Activated T-helper 1 cell treated with anti-CD3 and anti-CD28 coated beads, Interleukin-12 subunit alpha, Interleukin-12 subunit beta, Interleukin-2, Interleukin-4 antibody, amounts not matched to agents 30 ng/mL and 10 ng/mL and 1 ng/mL, durations not matched to agents 14 hours and 24 hours and 36 hours (primary cell): ENCODE measurements at regions of chr14 and their contacts with region 1.

Region 1: GRCh38 chr14:80996049-80996901 is 40.9 kb downstream of the TSHR start:
- DNase-seq: no peak
- H3K4me3 Mint-ChIP-seq: no peak overlapping the region
- H3K27ac Mint-ChIP-seq: no peak overlapping the region
- H3K4me1 Mint-ChIP-seq: peaks cover 8% of the 10 kb centered on the region
- H3K27me3 Mint-ChIP-seq: peaks cover 34% of the 10 kb centered on the region

Region 2: DNA sequence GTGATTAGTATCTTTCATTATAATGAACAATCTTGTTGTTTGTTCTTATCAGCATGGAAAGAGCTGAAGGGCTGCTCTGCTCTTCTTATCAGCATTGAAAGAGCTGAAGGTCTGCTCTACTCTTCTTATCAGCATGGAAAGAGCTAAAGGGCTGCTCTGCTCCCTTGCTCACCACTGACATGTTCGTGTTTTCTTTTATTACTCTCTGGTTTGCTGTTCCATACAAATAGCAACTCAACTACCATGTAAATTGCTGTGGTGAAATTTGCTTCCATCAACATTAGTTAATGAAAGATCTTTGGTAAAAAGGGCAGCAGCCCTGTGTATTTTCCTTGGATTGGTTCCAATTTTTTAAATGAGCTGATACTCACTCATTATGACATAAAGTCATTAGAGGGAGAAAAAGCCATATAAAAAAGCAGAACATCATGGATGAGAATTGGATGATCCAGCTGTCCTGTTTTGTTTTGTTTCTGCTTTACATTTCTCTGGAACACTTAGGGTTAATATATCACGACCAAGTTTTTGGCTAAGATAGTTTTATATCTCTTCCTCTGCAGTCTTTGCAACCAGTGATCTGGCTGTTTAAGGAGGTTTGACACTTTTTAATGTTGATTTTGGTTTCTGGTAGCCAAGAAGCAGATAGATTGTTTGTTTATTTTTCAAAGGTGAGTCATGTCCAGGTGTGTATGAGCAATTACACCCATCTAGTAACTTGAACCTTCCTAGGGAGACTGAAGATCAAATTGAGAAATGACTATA is 411.4 kb before region 1 on chr14:
- intact Hi-C with region 1: no loop called
- DNase-seq: no peak
- H3K4me3 Mint-ChIP-seq: no peak overlapping the region
- H3K27ac Mint-ChIP-seq: no peak overlapping the region
- H3K4me1 Mint-ChIP-seq: peaks cover 10% of the 10 kb centered on the region
- H3K27me3 Mint-ChIP-seq: no peaks in the 10 kb centered on the region

Region 3: DNA sequence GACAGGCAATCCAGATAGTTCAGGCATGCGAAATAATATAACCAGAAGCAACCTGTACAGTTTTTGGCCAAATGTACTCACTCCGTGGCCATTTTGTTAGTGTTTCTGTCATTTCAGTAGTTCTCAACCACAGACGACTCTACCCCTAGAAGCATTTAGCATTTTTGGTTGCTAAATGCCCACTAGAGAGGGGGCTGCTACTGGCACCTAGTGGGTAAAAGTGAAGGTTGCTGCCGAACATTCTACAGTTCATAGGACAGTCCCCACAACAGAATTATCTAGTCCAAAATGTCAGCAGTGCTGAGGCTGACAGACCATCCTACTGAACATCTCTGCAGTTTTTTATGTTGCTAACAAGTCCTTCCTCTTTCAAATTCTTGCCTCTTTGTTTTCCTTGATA is 66.5 kb after region 1 on chr14:
- intact Hi-C with region 1: loop called (anchors 5 kb)
- DNase-seq: no peak
- H3K4me3 Mint-ChIP-seq: no peak overlapping the region
- H3K27ac Mint-ChIP-seq: no peak overlapping the region
- H3K4me1 Mint-ChIP-seq: no peaks in the 10 kb centered on the region
- H3K27me3 Mint-ChIP-seq: peaks cover 3% of the 10 kb centered on the region

Region 4: GRCh38 chr14:81164167-81164774 is 168.0 kb after region 1 on chr14:
- intact Hi-C with region 1: loop called (anchors 1 kb)
- DNase-seq: peak; percentile 50
- H3K4me3 Mint-ChIP-seq: no peak overlapping the region
- H3K27ac Mint-ChIP-seq: peak overlapping the region; percentile 1
- H3K4me1 Mint-ChIP-seq: peaks cover 35% of the 10 kb centered on the region
- H3K27me3 Mint-ChIP-seq: no peaks in the 10 kb centered on the region

Region 5: DNA sequence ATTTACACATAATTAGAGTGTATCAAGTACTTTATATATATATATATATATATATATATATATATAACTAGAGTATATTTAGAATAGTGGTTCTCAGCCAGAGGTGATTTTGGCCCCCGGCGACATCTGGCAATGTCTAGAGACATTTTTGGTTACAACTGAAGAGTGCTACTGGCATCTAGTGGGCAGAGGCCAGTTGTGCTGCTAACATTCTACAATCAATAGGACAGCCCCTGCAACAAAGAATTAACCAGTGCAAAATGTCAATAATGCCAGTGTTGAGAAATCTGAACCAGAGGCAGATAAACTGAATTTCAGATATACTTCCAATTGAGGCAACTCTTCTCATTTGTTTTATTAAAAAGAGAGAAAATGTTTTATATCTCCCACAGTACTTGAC is 215.6 kb after region 1 on chr14:
- intact Hi-C with region 1: loop called (anchors 1 kb)
- DNase-seq: no peak
- H3K4me3 Mint-ChIP-seq: no peak overlapping the region
- H3K27ac Mint-ChIP-seq: no peak overlapping the region
- H3K4me1 Mint-ChIP-seq: peaks cover 28% of the 10 kb centered on the region
- H3K27me3 Mint-ChIP-seq: no peaks in the 10 kb centered on the region

Region 6: DNA sequence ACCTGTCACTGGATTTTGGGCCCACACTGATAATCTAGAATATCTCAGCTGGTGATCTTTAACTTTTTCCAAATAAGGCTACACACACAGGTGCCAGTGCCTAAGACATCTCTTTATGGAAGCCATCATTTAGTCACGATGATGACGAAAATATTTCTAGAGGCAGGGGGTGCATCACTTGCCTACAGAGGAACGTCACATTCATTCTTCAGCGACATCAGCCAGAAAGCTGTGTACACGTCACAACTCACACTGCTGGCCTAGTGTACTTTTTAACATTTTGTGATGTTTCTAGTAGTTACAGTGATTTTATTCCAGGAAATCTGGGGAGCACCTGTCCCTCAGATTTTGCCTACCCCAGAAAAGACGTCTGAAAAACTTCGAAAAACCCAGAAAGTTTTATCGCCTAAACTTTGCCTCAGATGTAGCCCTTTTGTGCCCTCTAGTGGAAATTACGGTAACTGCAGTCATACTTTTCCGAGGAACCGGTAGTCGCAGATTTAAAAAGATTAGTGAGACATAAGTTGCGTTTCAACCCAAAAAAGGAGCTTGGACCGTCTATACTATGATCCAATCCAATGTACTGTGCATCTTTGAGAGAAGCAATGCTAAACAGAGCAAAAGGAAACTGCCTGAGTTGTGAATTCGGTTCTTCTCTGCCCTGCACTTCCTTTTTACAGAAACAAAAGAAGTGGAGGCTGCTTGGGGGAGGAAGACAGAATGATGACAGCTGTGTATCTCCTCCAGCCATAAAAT is 468.1 kb after region 1 on chr14:
- intact Hi-C with region 1: loop called (anchors 2 kb)
- DNase-seq: peak; percentile 57
- H3K4me3 Mint-ChIP-seq: peak overlapping the region; percentile 77
- H3K27ac Mint-ChIP-seq: peak overlapping the region; percentile 63
- H3K4me1 Mint-ChIP-seq: peaks cover 12% of the 10 kb centered on the region
- H3K27me3 Mint-ChIP-seq: no peaks in the 10 kb centered on the region